ENCODE measurements at regions of chr12 and their contacts with region 1.

Region 1: GRCh38 chr12:106223485-106224354 is 24.1 kb downstream of the CKAP4 start:
- DNase-seq: peak; percentile 86
- H3K4me3 Mint-ChIP-seq: no peak overlapping the region
- H3K27ac Mint-ChIP-seq: no peak overlapping the region
- H3K4me1 Mint-ChIP-seq: peaks cover 18% of the 10 kb centered on the region
- H3K27me3 Mint-ChIP-seq: peaks cover 3% of the 10 kb centered on the region

Region 2: DNA sequence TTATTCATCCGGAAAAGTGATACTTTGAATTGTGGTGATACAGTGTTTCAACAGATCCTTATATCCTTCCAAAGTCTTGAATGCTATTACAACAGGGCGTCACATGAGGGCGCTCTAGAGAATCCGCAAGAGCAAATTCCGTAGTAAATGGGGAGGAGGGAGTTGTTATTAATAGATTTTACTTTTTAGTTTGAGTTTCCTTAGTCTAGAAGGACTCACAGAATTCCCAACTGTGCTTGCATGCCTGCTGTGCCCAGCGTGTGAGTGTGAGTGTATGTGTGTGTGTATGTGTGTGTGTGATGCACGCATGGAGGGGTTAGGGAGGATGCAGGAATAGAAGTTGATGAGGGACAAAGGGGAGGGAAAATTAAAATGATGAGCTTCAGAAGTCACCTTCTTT is 518.0 kb before region 1 on chr12:
- CTCF ChIA-PET with region 1: no interaction called
- intact Hi-C with region 1: loop called (anchors 5 kb)
- DNase-seq: peak; percentile 24
- H3K4me3 Mint-ChIP-seq: no peak overlapping the region
- H3K27ac Mint-ChIP-seq: no peak overlapping the region
- H3K4me1 Mint-ChIP-seq: no peaks in the 10 kb centered on the region
- H3K27me3 Mint-ChIP-seq: peaks cover 4% of the 10 kb centered on the region

Region 3: DNA sequence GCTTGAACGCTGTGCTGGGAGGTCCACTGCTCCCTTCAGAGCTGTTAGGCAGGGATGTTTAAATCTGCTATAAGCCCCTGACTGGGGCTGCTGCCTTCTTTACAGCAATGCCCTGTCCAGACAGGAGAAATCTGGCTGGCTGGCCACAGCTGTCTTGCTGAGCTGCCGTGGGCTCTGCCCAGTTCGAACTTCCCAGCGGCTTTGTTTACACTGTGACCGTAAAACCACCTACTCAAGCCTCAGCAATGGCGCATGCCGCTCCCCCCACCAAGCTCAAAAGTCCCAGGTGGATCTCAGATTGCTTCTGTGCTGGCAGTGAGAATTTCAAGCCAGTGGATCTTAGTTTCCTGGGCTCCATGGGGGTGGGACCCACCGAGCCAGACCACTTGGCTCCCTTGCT is 11.7 kb before region 1 on chr12:
- CTCF ChIA-PET with region 1: interaction called, 14 read pairs
- intact Hi-C with region 1: no loop called
- DNase-seq: no peak
- H3K4me3 Mint-ChIP-seq: no peak overlapping the region
- H3K27ac Mint-ChIP-seq: no peak overlapping the region
- H3K4me1 Mint-ChIP-seq: no peaks in the 10 kb centered on the region
- H3K27me3 Mint-ChIP-seq: peaks cover 26% of the 10 kb centered on the region

Region 4: GRCh38 chr12:106282457-106283097 is 58.9 kb after region 1 on chr12:
- CTCF ChIA-PET with region 1: interaction called, 192 read pairs
- intact Hi-C with region 1: loop called (anchors 1 kb)
- DNase-seq: peak; percentile 69
- H3K4me3 Mint-ChIP-seq: no peak overlapping the region
- H3K27ac Mint-ChIP-seq: no peak overlapping the region
- H3K4me1 Mint-ChIP-seq: peaks cover 14% of the 10 kb centered on the region
- H3K27me3 Mint-ChIP-seq: peaks cover 4% of the 10 kb centered on the region

Region 5: GRCh38 chr12:106357549-106358395 is 134.1 kb after region 1 on chr12 and contains the start of gene POLR3B:
- CTCF ChIA-PET with region 1: interaction called, 14 read pairs
- intact Hi-C with region 1: loop called (anchors 2 kb)
- DNase-seq: peak; percentile 97
- H3K4me3 Mint-ChIP-seq: peak within 1 kb of the TSS; percentile 92
- H3K27ac Mint-ChIP-seq: peak within 1 kb of the TSS; percentile 89
- H3K4me1 Mint-ChIP-seq: peaks cover 11% of the 10 kb centered on the region
- H3K27me3 Mint-ChIP-seq: no peaks in the 10 kb centered on the region
- total RNA-seq, gene POLR3B: 6.4 to 6.8 TPM